ENCODE measurements at regions of chr17 and their contacts with region 1.

Region 1: DNA sequence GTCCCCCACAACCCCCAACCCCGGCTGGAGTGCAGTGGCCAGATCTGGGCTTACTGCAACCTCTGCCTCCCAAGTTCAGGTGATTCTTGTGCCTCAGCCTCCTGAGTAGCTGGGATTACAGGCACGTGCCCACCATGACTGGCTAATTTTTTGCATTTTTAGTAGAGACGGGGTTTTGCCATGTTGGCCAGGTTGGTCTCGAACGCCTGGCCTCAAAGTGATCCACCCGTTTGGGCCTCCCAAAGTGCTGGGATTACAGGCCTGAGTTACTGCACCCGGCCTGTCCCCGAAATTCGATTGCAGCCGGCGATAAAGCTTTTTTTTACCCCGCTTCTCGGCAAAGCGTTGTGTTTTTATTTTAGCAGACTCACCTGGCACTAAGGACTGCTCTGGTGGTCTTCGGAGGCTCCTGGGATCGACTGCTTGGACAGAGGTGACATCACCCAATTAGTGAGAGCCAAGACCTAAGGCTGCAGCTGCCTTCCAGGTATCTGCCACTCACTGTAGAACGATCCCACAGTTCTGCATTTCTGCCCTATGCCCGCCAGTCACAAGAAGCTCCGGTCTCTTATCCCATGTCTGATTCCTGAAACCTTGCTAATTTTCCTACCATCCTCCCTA is 82.2 kb upstream of the ARL4D start:
- DNase-seq: no peak
- ATAC-seq: no peak

Region 2: DNA sequence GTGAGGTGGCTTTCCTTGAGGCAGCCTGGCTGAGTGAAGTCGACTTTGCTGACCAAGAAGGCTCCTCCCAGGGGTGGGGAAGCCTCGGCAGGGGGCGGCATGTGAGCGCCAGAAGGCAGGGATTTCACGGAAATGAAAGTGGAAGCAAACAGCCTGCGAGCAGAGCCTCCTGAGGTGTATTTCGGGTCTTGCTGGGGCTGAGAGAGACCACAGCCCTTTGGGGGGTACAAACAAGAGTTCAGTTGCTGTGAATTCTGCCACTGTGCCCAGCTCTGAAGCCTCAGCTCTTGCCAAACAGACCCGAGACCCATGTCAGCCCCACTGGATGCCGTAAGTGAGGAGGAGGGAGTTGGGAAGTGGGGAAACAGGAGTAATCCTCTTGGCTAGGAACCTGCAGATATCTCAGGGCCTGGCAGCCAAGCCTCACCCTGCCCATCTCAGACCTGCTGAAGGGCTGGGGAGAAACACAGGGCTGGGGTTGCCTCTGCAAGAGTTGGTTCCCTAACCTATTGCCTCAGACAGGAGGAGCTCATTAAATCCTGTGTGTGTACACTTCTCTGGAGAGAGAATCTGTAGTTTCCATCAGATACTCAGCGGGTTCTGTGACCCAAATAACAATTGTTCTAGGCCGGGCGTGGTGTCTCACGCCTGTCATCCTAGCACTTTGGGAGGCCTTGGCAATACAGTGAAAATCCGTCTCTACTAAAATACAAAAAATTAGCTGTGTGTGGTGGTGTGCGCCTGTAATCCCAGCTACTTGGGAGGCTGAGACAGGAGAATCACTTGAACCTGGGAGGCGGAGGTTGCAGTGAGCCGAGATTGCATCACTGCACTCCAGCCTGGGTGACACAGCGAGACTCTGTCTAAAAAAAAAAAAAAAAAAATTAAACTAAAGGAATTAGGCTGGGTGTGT is 309.7 kb before region 1 on chr17 and contains the start of gene IFI35:
- intact Hi-C with region 1: no loop called
- DNase-seq: peak; percentile 92
- ATAC-seq: peak; percentile 92
- total RNA-seq, gene IFI35: 15.9 TPM

Region 3: DNA sequence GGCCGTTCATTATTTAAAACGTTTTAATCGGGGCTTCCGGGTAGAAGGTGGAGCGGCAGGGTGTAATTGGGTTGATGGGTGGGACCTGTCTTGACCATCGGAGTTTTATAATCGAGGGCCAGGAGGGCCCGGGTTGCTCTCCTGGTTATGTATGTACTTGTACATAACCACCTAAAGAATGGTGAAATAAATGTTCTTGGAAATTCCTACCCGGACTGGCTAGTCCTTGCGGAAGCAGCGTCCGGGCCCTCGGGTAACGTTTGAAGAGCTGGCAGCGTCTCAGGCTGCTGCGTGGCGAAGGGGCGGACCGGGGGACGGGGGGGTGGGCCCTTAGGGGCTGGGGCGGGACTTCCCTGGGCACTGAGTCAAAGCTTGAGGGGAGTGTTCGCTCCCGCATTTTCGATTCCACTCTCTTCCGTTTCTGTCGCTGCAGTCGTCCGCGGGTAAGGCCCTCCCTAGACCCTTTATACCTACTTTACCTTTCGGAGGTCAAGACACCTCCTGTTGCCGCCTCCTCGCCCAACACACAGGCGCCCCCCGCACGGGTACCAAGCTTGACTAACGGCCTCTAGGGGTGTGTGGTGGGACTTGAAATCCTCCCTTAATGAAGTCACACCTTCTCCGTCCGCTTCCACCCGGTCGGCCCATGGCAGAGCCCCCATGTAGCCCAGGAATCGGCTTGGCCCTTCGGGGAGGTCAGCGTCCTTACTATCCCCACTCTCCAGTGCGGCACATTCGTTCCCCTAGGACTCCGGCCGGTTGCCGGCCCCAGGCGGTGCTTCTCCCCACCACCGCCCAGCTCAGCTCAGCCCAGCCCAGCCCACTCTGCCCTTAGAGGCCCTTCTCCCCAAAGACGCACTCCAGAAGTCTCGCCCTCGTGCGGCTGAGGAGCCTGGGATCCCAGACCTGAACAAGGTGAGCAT is 104.9 kb before region 1 on chr17 and contains the start of gene TMEM106A:
- intact Hi-C with region 1: loop called (anchors 10 kb)
- DNase-seq: peak; percentile 90
- ATAC-seq: peak; percentile 86
- total RNA-seq, gene TMEM106A: 4.1 TPM

Region 4: DNA sequence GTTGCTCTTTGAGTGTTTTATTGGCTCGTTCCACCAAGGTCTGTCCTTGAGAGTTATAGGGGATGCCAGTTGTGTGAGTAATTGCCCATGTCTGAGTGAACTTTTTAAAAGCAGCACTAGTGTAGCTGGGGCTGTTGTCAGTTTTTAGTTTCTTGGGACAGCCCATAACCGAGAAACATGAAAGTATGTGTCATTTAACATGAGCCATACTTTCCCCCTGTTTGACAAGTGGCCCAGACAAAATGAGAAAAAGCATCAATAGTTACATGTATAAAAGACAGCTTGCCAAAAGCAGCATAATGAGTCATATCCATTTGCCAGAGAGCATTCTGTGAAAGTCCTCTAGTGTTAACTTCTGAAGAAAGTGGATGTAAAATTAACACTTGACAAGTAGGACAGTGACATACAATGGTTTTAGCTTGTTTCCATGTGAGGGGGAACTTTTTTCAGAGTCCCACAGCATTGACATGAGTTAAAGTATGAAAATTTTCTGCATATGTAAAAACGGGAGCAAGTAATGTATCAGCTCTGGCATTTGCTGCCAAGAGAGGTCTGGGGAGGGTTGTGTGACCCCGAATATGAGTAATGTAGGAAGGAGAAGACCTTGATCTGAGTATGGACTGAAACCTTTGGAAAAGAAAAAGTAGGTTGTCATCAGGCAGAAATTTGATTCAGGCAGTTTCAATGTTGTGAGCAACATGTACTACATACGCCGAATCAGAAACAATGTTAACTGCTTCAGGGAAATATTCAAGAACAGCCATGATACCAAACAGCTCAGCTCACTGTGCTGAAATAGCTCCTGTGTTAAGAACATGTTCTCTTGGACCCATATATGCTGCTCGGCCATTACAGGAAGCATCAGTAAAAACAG is 25.3 kb after region 1 on chr17:
- intact Hi-C with region 1: no loop called
- DNase-seq: no peak
- ATAC-seq: no peak